Mammary epithelial cell (primary cell): ENCODE measurements at regions of chr3 and their contacts with region 1.

Region 1: GRCh38 chr3:122092460-122093165 is 37.5 kb downstream of the CD86 start:
- DNase-seq: peak; percentile 37
- H3K4me3 ChIP-seq: no peak overlapping the region
- H3K27ac ChIP-seq: no peak overlapping the region
- H3K4me1 ChIP-seq: no peaks in the 10 kb centered on the region
- H3K27me3 ChIP-seq: no peaks in the 10 kb centered on the region
- CTCF ChIP-seq: peak; percentile 62 to 76

Region 2: GRCh38 chr3:121855555-121855954 is 237.1 kb before region 1 on chr3:
- CTCF ChIA-PET with region 1: no interaction called
- dilution Hi-C with region 1: no loop called
- in situ Hi-C with region 1: no loop called
- intact Hi-C with region 1: loop called (anchors 5 kb)
- DNase-seq: peak; percentile 31
- H3K4me3 ChIP-seq: no peak overlapping the region
- H3K27ac ChIP-seq: no peak overlapping the region
- H3K4me1 ChIP-seq: peaks cover 8% of the 10 kb centered on the region
- H3K27me3 ChIP-seq: no peaks in the 10 kb centered on the region
- CTCF ChIP-seq: peak; percentile 44 to 65

Region 3: DNA sequence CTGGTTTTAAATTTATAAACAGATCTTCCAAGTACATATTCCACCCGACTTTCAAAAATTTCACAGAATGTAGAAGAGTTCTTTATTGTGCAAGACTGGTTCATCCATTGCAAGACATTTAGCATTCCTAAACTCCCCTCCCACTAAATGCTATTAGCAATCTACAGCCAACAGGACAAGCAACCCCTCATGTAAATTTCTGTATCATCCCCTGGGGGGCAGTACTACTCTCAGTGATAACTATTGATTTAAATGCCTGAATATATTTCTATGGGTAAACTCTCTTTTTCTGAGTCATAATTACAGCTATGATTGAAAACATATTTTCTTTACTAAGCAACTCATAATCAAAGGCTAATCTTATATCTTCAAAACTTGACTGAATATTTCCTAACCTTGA is 209.1 kb before region 1 on chr3:
- CTCF ChIA-PET with region 1: no interaction called
- dilution Hi-C with region 1: no loop called
- in situ Hi-C with region 1: no loop called
- intact Hi-C with region 1: loop called (anchors 2 kb)
- DNase-seq: peak; percentile 46
- H3K4me3 ChIP-seq: no peak overlapping the region
- H3K27ac ChIP-seq: no peak overlapping the region
- H3K4me1 ChIP-seq: peaks cover 10% of the 10 kb centered on the region
- H3K27me3 ChIP-seq: no peaks in the 10 kb centered on the region
- CTCF ChIP-seq: peak; percentile 45 to 56

Region 4: DNA sequence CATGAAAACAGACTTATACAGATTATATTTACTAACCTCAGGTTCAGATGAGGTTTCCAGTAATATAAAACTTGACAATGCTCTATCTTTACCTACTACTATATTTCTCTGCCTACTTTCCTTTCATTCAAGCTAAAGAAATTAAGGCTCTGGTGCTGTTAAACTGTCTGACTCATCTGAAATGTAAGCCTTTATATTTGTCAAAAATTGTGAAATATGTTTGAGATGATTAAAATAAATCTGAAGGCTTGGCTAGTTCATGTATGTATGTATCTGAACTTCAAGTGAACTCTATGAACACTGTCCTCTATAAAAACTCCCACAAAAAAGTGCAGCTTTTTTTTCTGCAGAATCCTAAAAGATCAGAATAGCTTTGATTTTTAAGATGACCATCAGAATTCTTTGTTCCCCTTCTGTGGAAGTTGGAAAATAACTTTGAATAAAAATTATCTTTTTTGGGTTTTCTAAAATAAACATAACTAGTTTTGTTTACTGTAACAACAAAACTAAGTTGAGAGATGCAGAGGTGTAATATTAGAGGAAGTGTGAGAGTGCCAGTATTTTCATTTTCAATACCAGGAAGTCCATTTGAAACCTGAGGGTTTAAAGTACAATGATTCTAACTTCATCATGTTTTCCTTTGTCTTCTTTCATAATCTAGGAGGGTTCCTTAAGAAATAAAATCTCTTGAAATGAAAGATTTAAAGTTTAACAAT is 112.7 kb before region 1 on chr3:
- CTCF ChIA-PET with region 1: no interaction called
- dilution Hi-C with region 1: no loop called
- in situ Hi-C with region 1: no loop called
- intact Hi-C with region 1: loop called (anchors 5 kb)
- DNase-seq: peak; percentile 69
- H3K4me3 ChIP-seq: peak overlapping the region in 2 of 3 experiments; percentile 26
- H3K27ac ChIP-seq: peak overlapping the region; percentile 46
- H3K4me1 ChIP-seq: peaks cover 37% of the 10 kb centered on the region
- H3K27me3 ChIP-seq: no peaks in the 10 kb centered on the region
- CTCF ChIP-seq: no peak